ENCODE measurements at regions of chr10 and their contacts with region 1.

Region 1: GRCh38 chr10:69458426-69459108 is 7.3 kb downstream of the TSPAN15 start:
- DNase-seq: peak in 8 of 10 donors; percentile 31 to 91 (median 68)

Region 2: DNA sequence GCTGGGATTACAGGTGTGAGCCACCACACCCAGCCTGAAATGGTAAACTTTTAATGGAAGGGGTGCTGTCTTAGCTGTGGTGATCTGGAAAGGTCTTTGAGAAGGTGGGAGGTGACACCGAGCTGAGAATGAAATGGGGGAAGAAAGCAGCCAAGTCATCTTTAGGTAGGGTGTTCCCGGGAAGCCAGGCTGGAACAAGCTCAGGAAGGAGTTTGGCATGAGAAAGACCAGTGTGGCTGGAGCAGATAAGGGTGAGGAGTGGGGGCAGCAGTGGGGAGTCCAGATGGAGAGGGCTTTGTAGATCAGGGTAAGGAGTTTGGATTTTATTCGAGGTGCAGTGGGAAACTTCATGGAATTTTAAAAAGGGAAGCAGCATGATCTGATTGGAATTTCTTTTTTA is 440.0 kb before region 1 on chr10:
- intact Hi-C with region 1: no loop called
- DNase-seq: no peak

Region 3: DNA sequence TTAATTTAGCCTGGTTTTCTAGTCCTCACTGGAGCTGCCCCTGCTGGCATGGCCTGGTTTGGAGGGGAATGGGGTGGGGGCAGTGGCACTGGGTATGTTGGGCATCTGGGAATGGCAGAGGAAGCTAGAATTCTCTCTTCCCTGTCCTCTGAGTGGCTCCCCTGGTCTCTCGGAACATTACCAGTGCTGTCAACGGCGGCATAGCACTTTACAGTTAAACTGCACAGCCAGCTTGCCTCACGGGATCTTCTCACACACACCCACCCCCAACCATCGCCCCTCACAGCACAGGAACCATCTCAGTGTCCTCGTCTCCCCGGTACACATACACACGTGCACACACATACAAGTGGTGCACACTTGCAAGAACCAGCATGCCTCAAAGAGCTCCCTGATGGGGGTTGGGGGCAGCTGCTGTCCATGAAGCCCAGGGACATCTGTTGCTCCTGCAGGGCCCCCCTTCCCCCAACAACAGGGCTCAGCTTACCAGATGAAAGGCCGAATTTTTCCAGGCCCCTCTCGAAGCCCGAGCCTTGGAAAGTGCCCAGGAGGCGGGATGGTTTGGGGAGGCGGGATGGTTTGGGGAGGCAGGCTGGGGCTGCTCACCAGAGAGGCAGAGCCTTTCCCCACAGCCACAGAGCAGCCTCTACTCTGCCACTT is 33.7 kb after region 1 on chr10:
- intact Hi-C with region 1: loop called (anchors 1 kb)
- DNase-seq: peak in 7 of 10 donors; percentile 40 to 92 (median 58)

Region 4: GRCh38 chr10:69588386-69588785 is 129.8 kb after region 1 on chr10:
- intact Hi-C with region 1: no loop called
- DNase-seq: no peak